Activated CD8-positive, alpha-beta memory T cell treated with anti-CD3 and anti-CD28 coated beads, Interleukin-2, amount 10 ng/mL, durations not matched to agents 7 days and 5 days (primary cell): ENCODE measurements at regions of chr16 and their contacts with region 1.

Region 1: GRCh38 chr16:30628627-30629540 is 18.7 kb upstream of the ZNF689 start:
- DNase-seq: peak; percentile 93
- ATAC-seq: peak; percentile 93
- H3K4me3 Mint-ChIP-seq: peak overlapping the region; percentile 54
- H3K27ac Mint-ChIP-seq: peak overlapping the region; percentile 71
- H3K4me1 Mint-ChIP-seq: peaks cover 17% of the 10 kb centered on the region
- H3K27me3 Mint-ChIP-seq: peaks cover under 1% of the 10 kb centered on the region

Region 2: DNA sequence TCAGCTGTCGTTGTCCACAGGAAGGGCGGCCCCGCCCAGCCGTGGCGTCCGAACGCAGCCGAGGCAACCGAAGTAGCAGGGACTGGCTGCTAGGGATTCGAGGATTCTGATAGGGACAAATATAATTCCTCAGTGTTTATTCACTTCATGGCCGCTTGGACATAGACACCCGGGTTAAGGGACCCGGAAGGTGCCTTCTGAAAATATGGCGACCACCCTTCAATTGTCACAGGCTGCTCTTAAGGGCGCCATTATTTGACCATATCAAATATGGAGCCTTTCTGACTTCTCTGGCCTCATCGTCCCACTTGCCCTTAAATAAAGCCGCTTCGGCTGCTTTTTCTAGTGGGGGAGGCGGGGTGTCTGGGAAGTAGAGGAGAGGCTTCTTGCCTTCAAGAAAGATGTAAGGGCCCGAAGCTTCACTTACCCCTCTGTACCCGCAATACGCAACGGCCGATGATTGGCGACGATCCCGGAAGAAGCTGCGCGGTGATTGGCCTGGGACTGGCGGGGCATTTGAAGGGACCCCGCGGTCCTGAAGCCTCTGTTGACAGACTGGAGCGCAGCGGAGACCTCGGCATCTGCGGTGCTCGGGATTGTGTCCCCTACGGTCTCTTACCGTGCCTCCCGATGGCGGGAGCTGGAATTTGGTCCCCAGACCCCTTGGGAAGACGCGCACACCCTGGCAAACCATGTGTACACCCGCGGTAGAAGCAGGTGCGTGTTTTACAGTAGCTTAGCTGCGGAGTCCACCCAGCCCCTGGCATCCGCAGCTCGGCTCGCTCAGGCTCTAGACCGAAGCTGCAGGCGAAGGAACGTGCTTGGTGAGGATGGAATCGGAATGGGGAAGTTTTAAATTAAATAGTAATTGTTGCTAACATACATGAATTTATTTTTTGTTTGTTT is 56.9 kb before region 1 on chr16 and contains the start of gene ZNF688:
- CTCF ChIA-PET with region 1: interaction called, 14 read pairs
- DNase-seq: peak; percentile 98
- ATAC-seq: peak; percentile 86
- H3K4me3 Mint-ChIP-seq: peak within 1 kb of the TSS; percentile 99
- H3K27ac Mint-ChIP-seq: peak within 1 kb of the TSS; percentile 94
- H3K4me1 Mint-ChIP-seq: peaks cover 52% of the 10 kb centered on the region
- H3K27me3 Mint-ChIP-seq: no peaks in the 10 kb centered on the region
- total RNA-seq, gene ZNF688: 14.5 to 14.7 TPM

Region 3: GRCh38 chr16:30602616-30603277 is 26.1 kb before region 1 on chr16:
- CTCF ChIA-PET with region 1: interaction called, 14 read pairs
- DNase-seq: no peak
- ATAC-seq: no peak
- H3K4me3 Mint-ChIP-seq: no peak overlapping the region
- H3K27ac Mint-ChIP-seq: no peak overlapping the region
- H3K4me1 Mint-ChIP-seq: peaks cover 12% of the 10 kb centered on the region
- H3K27me3 Mint-ChIP-seq: no peaks in the 10 kb centered on the region

Region 4: DNA sequence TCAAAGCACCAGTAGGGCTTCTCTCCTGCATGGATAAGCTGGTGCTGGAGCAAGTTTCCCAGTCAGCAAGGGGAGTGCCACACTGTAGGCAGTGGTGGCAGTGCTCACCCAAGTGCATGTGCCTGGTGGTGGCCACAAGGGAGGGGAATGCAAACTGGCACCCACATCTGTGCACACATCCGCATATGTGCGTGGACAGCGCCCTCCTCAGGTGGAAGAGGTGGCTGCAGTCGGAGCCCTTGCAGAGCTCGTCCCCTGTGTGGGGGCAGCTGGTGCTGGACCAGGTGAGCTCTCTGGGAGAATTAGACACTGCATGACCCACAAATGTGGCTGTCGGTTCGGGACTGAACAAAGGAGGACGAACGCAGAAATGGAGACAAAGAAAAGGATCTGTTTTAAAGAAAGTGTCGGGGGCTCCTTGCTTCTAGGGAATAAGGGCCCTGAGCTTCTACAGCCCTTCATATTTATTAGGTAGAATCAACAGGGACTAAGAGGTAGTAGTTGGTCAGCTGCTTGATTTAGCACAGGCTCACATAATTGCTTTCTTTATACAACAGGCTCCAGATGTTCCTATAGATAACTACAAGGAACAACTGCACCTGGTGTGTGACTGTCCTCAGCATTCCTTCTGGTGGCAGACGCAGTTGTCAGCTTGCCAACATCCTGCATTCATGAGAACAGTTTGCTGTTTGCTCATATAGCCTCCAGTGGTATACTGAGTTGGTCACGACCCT is 13.4 kb before region 1 on chr16:
- CTCF ChIA-PET with region 1: interaction called, 30 read pairs
- DNase-seq: peak; percentile 88
- ATAC-seq: peak; percentile 87
- H3K4me3 Mint-ChIP-seq: no peak overlapping the region
- H3K27ac Mint-ChIP-seq: no peak overlapping the region
- H3K4me1 Mint-ChIP-seq: peaks cover 15% of the 10 kb centered on the region
- H3K27me3 Mint-ChIP-seq: peaks cover 4% of the 10 kb centered on the region

Region 5: DNA sequence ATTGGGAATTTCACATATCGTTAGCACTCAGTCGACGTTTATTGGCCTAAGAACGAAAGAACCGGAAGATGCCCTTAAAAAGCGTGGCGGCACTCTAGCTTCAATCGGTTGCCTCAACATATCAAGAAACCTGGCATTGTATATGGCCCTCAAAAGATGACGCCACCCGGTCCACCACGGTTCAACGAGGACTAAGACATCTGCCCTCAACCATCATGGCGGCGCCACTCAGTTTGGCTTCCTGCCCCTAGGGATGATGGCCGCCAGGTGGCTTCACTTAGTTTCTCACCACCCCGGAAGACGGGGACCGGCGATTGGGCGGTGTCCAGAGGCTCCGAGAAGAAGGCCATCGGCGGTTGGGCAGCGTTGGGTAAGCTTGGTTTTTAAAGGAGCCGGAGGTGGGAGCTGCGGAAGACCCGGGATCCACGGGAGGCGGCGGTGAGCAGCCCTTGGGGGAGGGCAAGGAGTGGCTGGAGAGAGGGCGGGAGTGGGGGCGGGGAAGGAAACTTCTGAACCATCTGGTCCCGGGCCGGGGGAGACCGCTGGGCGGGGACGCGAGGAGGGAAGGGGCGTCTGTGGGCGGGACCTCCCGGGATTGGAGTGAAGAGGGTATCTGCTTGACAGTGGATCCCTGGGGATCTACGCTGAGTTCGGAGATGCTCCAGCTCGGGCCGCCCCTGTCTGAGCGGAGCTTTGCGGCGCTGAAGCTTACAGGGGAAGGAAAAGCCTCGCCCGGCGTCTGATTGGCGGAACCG is 21.7 kb after region 1 on chr16 and contains the start of gene PRR14:
- CTCF ChIA-PET with region 1: interaction called, 13 read pairs
- DNase-seq: peak; percentile 100
- ATAC-seq: peak; percentile 79
- H3K4me3 Mint-ChIP-seq: peak within 1 kb of the TSS; percentile 96
- H3K27ac Mint-ChIP-seq: peak within 1 kb of the TSS; percentile 97
- H3K4me1 Mint-ChIP-seq: peaks cover 33% of the 10 kb centered on the region
- H3K27me3 Mint-ChIP-seq: no peaks in the 10 kb centered on the region
- total RNA-seq, gene PRR14: 111 to 116 TPM

Region 6: DNA sequence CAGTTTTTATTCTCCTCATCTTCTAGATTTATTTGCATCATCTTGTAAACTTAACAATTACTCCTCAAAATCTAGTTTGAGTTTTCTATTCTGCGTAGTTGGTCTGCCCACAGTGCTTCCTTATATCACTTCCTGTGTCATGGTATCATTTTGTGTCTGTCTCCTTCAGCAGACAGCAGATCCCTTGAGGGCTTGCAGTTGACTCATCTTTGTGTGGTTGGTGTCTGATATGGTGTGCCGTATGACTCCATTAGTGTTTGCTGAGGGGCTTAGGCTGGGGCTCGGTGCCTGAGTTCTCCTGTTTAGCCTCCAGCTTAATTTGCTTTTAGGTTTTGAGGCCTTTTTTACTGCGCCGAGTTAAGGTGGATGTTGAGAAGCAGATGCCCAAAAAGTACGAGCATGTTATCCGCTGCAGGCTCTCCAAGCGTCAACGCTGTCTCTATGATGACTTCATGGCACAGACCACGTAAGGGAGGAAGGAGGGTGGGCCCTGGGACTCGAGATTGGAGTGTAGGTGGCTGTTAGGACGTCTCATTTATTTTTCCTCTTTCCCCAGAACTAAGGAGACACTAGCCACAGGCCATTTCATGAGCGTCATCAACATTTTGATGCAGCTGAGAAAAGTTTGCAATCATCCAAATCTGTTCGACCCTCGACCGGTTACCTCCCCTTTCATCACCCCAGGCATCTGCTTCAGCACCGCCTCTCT is 87.0 kb after region 1 on chr16:
- CTCF ChIA-PET with region 1: no interaction called
- DNase-seq: peak; percentile 78
- ATAC-seq: peak; percentile 100
- H3K4me3 Mint-ChIP-seq: peak overlapping the region; percentile 53
- H3K27ac Mint-ChIP-seq: peak overlapping the region; percentile 95
- H3K4me1 Mint-ChIP-seq: peaks cover 40% of the 10 kb centered on the region
- H3K27me3 Mint-ChIP-seq: no peaks in the 10 kb centered on the region